ENCODE measurements at regions of chr5 and their contacts with region 1.

Region 1: GRCh38 chr5:159100025-159100781 is 487 bp upstream of the EBF1 start:
- DNase-seq: peak; percentile 92 to 95 (median 93)
- ATAC-seq: peak; percentile 86 to 93 (median 90)
- H3K4me3 ChIP-seq: peak overlapping the region; percentile 50 to 87 (median 72)
- H3K27ac ChIP-seq: peak overlapping the region; percentile 81 to 95 (median 92)
- H3K4me1 ChIP-seq: peaks cover 0 to 56% (median 23%) of the 10 kb centered on the region in 12 donors
- H3K27me3 ChIP-seq: peaks cover 0 to 74% (median 15%) of the 10 kb centered on the region in 9 donors
- CTCF ChIP-seq: peak in 2 of 12 donors; percentile 14 to 19
- POLR2A ChIP-seq: peak; percentile 76 to 99

Region 2: GRCh38 chr5:158802941-158803341 is 297.3 kb before region 1 on chr5:
- intact Hi-C with region 1: loop called in 1 of 10 experiments (anchors 5 kb)
- DNase-seq: no peak
- ATAC-seq: peak; percentile 51 to 73 (median 54)
- H3K4me3 ChIP-seq: peak overlapping the region in 1 of 12 donors; percentile 11
- H3K27ac ChIP-seq: peak overlapping the region in 10 of 12 donors; percentile 14 to 56 (median 44)
- H3K4me1 ChIP-seq: peaks cover 0 to 70% (median 32%) of the 10 kb centered on the region in 12 donors
- H3K27me3 ChIP-seq: no peaks in the 10 kb centered on the region
- CTCF ChIP-seq: no peak
- POLR2A ChIP-seq: no peak

Region 3: DNA sequence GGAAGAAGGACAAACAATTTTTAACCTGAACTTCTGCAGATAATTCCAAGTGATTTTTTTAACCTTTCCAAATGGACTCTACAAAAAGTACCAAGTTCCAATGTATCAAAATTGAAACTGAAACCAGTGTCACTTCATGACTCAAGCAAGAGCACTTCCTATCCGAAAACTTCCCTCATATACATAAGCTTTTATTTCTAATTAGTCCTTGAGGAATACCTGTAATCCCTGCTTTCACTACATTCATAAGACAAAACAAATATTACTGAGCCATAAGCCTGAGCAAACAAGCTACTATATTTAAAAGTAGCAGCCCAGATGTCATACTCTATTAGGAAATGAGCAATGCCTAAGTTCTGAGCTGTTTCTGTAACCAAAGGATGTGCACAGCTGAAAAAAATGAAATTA is 224.9 kb before region 1 on chr5:
- intact Hi-C with region 1: loop called in 6 of 10 experiments (anchors 5 to 10 kb)
- DNase-seq: no peak
- ATAC-seq: peak in 2 of 4 donors; percentile 62 to 67
- H3K4me3 ChIP-seq: peak overlapping the region in 10 of 12 donors; percentile 10 to 42 (median 22)
- H3K27ac ChIP-seq: peak overlapping the region in 11 of 12 donors; percentile 33 to 78 (median 69)
- H3K4me1 ChIP-seq: peaks cover 0 to 65% (median 29%) of the 10 kb centered on the region in 12 donors
- H3K27me3 ChIP-seq: no peaks in the 10 kb centered on the region
- CTCF ChIP-seq: no peak
- POLR2A ChIP-seq: no peak

Region 4: DNA sequence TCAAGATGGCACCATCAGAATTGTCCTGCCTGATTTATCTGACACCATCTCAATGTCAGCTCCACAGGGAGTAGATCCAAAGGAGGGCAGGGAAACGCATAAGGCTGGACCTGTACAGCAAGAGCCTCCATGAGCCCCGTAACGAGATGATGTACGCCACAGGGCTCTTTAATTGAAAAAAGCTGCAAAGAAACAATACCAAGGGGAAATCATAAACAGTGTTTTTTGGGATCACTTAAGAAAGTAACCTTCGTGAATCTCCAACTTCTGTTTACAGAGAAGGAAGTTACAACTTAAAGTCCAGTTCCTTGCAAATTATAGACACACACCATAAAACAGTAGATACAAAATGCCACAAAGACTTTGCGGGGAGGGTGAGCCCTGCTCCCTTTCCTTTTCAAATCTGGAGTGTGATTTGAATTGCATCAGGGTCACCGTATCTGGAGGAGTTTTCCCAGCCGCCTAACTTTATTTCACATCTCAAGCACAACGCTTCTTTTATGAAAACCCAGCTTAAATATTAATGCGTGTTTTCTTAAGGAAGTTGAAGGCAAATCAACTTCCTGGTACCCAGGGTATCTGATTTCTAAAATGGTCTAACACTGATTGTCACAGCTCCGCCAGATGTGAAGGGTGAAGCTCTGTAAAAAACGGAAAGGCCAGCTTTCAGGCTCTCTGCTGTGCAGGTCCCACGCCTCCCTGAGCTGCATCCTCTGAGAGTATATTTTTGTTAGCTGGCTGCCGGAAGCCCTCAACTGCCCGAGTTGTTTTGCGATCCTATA is 89.4 kb before region 1 on chr5:
- intact Hi-C with region 1: loop called in 2 of 10 experiments (anchors 10 kb)
- DNase-seq: peak in 3 of 5 donors; percentile 49 to 57 (median 54)
- ATAC-seq: peak; percentile 76 to 81 (median 79)
- H3K4me3 ChIP-seq: peak overlapping the region in 10 of 12 donors; percentile 3 to 43 (median 34)
- H3K27ac ChIP-seq: peak overlapping the region; percentile 19 to 85 (median 76)
- H3K4me1 ChIP-seq: peaks cover 0 to 54% (median 28%) of the 10 kb centered on the region in 12 donors
- H3K27me3 ChIP-seq: no peaks in the 10 kb centered on the region
- CTCF ChIP-seq: no peak
- POLR2A ChIP-seq: no peak

Region 5: GRCh38 chr5:159049844-159050315 is 50.3 kb before region 1 on chr5:
- intact Hi-C with region 1: loop called in 9 of 10 experiments (anchors 2 to 5 kb)
- DNase-seq: no peak
- ATAC-seq: peak; percentile 43 to 70 (median 63)
- H3K4me3 ChIP-seq: peak overlapping the region in 7 of 12 donors; percentile 1 to 55 (median 44)
- H3K27ac ChIP-seq: peak overlapping the region; percentile 73 to 88 (median 84)
- H3K4me1 ChIP-seq: peaks cover 0 to 79% (median 45%) of the 10 kb centered on the region in 12 donors
- H3K27me3 ChIP-seq: peaks cover 0 to 13% (median 0%) of the 10 kb centered on the region in 9 donors
- CTCF ChIP-seq: peak; percentile 24 to 66 (median 44)
- POLR2A ChIP-seq: peak in 1 of 2 donors; percentile 24

Region 6: DNA sequence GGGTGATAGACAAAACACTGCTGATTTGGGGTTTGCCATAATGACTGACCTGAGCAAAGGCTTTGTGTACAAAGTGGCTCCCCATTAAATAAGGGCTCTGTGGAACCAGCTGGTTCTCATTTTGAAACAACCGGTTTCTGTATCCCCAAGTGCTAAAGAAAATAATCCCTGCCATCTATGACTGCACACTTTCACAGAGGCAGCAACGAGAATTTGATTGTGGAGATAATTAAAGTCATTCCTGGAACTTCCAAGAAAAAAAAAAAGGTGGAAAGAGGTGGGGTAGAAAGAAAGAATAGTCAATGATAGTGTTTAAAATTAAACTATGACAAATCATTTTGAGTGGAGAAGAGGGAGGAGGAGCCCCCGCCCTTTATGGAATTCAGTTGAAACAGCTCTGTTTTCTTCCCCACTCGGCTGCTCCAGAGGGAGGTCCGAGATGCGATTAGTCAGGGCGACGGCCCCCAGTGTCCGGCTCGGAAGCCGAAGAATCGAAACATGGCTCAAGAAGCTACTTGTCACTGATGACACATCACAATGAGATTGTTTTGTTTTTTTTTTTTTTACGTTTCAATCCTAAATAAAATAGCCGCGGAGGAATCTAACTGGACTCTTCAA is 38.9 kb before region 1 on chr5:
- intact Hi-C with region 1: loop called in 1 of 10 experiments (anchors 5 kb)
- DNase-seq: peak; percentile 59 to 86 (median 65)
- ATAC-seq: peak in 3 of 4 donors; percentile 83 to 93 (median 92)
- H3K4me3 ChIP-seq: peak overlapping the region in 10 of 12 donors; percentile 6 to 54 (median 29)
- H3K27ac ChIP-seq: peak overlapping the region; percentile 44 to 83 (median 65)
- H3K4me1 ChIP-seq: peaks cover 0 to 60% (median 27%) of the 10 kb centered on the region in 12 donors
- H3K27me3 ChIP-seq: no peaks in the 10 kb centered on the region
- CTCF ChIP-seq: no peak
- POLR2A ChIP-seq: no peak